ENCODE measurements at regions of chr12 and their contacts with region 1.

Region 1: DNA sequence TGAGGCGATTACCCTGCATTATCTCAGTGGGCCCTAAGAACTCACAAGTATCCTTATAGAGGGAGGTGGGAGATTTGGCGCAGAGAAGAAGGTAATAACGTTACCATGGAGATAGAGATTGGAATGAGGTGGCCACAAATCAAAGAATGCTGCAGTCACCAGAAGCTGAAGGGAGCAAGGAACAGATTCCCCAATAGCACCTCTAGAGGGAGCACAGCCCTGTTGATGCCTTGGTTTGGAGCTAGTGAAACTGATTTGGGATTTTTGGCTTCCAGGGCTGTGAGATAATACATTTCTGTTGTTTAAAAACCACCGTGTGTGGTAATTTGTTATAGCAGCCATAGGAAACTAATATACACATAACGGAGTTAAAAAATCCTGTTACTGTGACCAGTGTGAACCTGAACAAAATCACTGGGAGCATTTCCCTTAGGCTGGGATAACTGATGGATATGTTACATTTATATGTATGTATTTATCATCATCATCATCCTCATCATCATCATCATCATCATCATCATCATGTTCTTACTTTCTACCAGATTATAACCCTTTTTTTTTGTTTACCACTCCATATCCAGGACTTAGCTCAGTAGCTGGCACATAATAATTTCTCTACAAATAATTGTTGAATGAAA is 100.3 kb downstream of the LIN7A start:
- DNase-seq: peak in 1 of 2 donors; percentile 38
- ATAC-seq: peak in 7 of 8 donors; percentile 71 to 94 (median 84)
- H3K4me3 ChIP-seq: no peak overlapping the region
- H3K27ac ChIP-seq: peak overlapping the region in 1 of 10 donors; percentile 4
- H3K4me1 ChIP-seq: peaks cover 0 to 23% (median 16%) of the 10 kb centered on the region in 9 donors
- H3K27me3 ChIP-seq: no peaks in the 10 kb centered on the region
- CTCF ChIP-seq: peak; percentile 30 to 78 (median 66)

Region 2: GRCh38 chr12:80936498-80937390 is 99.3 kb after region 1 on chr12:
- intact Hi-C with region 1: loop called in 9 of 10 experiments (anchors 2 to 10 kb)
- DNase-seq: peak; percentile 27 to 48
- ATAC-seq: peak; percentile 64 to 94 (median 78)
- H3K4me3 ChIP-seq: peak overlapping the region; percentile 68 to 84 (median 77)
- H3K27ac ChIP-seq: peak overlapping the region; percentile 79 to 96 (median 94)
- H3K4me1 ChIP-seq: peaks cover 0 to 30% (median 13%) of the 10 kb centered on the region in 9 donors
- H3K27me3 ChIP-seq: peaks cover 0 to 18% (median 0%) of the 10 kb centered on the region in 7 donors
- CTCF ChIP-seq: peak in 2 of 9 donors; percentile 7 to 14

Region 3: GRCh38 chr12:80946594-80946993 is 109.1 kb after region 1 on chr12:
- intact Hi-C with region 1: loop called in 3 of 10 experiments (anchors 5 to 10 kb)
- DNase-seq: no peak
- ATAC-seq: no peak
- H3K4me3 ChIP-seq: no peak overlapping the region
- H3K27ac ChIP-seq: no peak overlapping the region
- H3K4me1 ChIP-seq: peaks cover 0 to 5% (median 0%) of the 10 kb centered on the region in 9 donors
- H3K27me3 ChIP-seq: no peaks in the 10 kb centered on the region
- CTCF ChIP-seq: peak in 6 of 9 donors; percentile 20 to 54 (median 45)

Region 4: DNA sequence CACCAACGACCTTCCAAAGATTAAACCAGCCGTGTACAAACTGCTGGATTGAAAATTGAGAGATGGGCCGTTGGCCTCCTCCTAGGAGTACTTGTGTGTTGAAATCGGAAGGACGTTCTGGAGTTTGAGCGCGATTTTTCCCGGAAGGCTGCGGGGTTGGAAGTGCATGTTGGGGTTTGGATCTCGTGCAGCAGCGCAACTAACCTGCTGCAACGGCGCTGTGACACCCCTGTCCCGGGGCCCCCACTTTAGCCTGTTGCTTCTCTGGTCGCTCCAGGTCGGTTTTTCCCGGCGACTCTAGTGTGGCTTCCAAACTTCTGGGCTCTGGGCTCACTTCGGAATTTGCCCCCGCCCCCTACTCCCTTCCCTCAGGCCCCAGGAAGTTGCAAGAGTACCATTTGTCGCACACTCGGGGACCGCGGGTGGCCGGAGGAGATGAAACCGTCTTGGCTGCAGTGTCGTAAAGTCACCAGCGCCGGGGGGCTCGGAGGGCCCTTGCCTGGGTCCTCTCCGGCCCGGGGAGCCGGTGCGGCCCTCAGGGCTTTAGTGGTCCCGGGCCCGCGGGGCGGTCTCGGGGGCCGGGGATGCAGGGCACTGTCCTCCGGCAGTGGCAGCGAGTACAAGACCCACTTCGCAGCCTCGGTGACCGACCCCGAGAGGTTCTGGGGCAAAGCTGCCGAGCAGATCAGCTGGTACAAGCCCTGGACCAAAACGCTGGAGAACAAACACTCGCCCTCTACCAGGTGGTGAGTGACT is 240.4 kb after region 1 on chr12 and contains the start of gene ACSS3:
- intact Hi-C with region 1: loop called in 1 of 10 experiments (anchors 5 kb)
- DNase-seq: peak; percentile 65 to 78
- ATAC-seq: peak; percentile 87 to 93 (median 90)
- H3K4me3 ChIP-seq: peak within 1 kb of the TSS; percentile 29 to 85 (median 78)
- H3K27ac ChIP-seq: peak within 1 kb of the TSS; percentile 72 to 94 (median 92)
- H3K4me1 ChIP-seq: peaks cover 0 to 46% (median 15%) of the 10 kb centered on the region in 9 donors
- H3K27me3 ChIP-seq: peaks cover 0 to 17% (median 0%) of the 10 kb centered on the region in 7 donors
- CTCF ChIP-seq: no peak
- total RNA-seq, gene ACSS3: 17.5 to 30.3 (median 25.5) TPM

Region 5: DNA sequence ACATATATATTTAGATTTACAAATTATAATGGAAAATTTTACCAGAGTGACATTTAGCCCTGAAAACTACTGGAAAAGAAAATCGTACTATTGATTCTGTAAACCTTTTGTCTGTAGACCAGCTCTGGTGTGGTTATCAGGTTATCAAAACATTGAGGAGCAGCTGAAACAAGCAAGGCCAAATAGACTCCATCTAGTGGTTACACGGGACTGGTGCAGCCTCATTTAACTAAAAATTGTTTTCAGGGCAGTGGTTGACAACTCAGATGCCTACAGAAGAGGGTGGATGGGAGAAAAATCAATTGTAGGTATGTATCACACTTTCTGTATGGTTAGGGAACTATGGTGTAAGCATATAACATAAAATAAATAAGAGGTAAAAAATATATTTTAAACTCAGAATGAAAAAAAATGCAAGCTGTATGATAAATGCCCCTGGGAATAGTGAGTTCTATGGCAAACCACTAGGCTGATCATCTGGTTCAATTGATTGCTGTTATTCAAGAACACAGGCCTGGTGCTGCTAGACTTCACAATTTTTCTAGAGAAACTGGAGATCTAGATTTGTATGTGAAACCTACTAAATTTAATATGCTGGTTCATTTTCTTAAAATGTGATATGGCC is 291.6 kb after region 1 on chr12:
- intact Hi-C with region 1: loop called in 1 of 10 experiments (anchors 10 kb)
- DNase-seq: peak in 1 of 2 donors; percentile 7
- ATAC-seq: peak in 3 of 8 donors; percentile 38 to 49 (median 44)
- H3K4me3 ChIP-seq: no peak overlapping the region
- H3K27ac ChIP-seq: no peak overlapping the region
- H3K4me1 ChIP-seq: peaks cover 0 to 4% (median 0%) of the 10 kb centered on the region in 9 donors
- H3K27me3 ChIP-seq: no peaks in the 10 kb centered on the region
- CTCF ChIP-seq: peak in 8 of 9 donors; percentile 62 to 72 (median 66)

Region 6: DNA sequence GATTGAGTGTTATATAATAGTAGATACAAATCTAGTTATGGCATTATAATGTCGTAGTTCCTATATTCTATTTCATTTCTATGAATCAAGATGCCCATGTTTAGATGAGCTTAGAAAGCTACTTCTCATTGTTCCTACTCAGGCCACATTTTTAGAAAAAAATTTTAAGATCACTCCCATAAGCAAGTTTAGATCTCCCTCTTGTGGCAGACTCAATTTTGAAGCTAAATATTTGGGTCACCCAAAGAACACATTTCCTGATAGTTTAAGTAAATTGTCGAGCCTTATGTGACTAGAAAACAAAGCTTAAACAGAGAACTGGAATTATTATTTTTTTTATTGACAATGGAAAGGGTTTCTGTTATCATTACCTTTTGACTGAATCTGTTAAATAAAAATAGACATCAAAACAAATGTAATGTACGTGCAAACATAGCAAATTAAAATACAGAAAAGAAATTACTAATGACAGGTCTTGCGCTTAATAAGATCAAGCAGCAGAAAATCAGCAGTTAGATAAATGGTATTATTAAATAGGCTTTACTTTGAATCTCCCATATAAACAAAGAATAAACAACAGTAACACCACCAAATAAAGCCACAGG is 420.6 kb after region 1 on chr12:
- intact Hi-C with region 1: loop called in 2 of 10 experiments (anchors 5 to 10 kb)
- DNase-seq: no peak
- ATAC-seq: no peak
- H3K4me3 ChIP-seq: no peak overlapping the region
- H3K27ac ChIP-seq: no peak overlapping the region
- H3K4me1 ChIP-seq: no peaks in the 10 kb centered on the region
- H3K27me3 ChIP-seq: no peaks in the 10 kb centered on the region
- CTCF ChIP-seq: peak in 7 of 9 donors; percentile 33 to 55 (median 42)